ENCODE measurements at regions of chr12 and their contacts with region 1.

Region 1: DNA sequence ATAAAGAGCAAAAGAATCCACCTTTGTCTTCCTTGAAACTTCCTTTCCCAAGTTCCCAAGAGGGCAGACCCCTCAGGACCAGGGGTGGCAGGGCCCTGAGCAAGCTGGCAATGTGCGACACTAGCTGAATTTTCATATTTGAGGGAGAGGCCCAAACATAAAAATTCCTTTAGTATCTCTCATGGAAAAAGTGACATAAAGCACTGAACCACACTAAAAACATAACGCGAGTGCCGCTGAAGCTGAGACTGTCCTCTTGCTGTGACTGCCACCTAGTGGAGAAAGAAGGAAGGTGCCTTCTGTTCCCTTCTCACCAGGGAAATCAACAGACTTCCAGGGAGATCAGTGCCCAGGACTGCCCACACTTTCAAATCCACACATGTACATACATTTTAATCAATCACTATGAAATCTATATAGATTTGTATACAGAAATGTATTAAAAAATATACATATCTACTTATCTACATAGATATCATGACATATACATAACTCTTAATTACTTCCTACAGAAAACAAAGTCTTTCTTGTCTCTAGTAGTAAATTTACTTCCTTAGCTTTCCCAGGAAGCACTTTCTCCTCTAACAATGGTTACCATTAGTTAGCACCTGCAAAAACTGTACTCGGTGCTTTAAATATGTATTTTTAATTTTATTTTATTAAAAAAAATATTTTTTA is 53.8 kb downstream of the SSH1 start:
- DNase-seq: peak; percentile 85
- H3K4me3 ChIP-seq: no peak overlapping the region
- H3K27ac ChIP-seq: peak overlapping the region; percentile 99
- H3K27me3 ChIP-seq: no peaks in the 10 kb centered on the region
- CTCF ChIP-seq: peak; percentile 96

Region 2: GRCh38 chr12:107093417-107094182 is 1710.0 kb before region 1 on chr12 and contains the start of gene CRY1:
- CTCF ChIA-PET with region 1: no interaction called
- POLR2A ChIA-PET with region 1: interaction called, 14 read pairs
- DNase-seq: peak; percentile 86
- H3K4me3 ChIP-seq: peak within 1 kb of the TSS; percentile 93
- H3K27ac ChIP-seq: peak within 1 kb of the TSS; percentile 99
- H3K27me3 ChIP-seq: no peaks in the 10 kb centered on the region
- CTCF ChIP-seq: no peak
- polyA plus RNA-seq, gene CRY1: 10.3 and 13.7 TPM in 2 replicates

Region 3: DNA sequence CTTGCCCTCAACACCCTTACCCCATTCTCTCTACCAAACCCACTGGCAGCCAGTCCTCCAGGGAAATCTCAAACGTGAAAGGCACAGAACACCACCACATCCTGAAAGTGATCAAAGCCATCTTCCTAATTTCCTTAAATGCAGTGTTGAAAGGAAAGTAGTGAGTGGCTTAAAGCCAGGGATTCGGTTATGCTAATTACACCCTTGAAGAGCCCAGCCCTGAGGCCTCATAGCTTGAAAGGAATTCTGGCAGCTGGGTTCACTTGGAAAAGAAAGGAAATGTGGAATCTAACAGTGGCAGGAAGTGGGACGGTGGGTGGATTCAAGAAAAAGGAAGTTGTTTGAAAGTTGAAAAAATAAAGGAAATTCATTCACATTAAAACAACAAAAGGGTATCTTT is 361.5 kb before region 1 on chr12:
- CTCF ChIA-PET with region 1: no interaction called
- POLR2A ChIA-PET with region 1: no interaction called
- DNase-seq: no peak
- H3K4me3 ChIP-seq: no peak overlapping the region
- H3K27ac ChIP-seq: no peak overlapping the region
- H3K27me3 ChIP-seq: no peaks in the 10 kb centered on the region
- CTCF ChIP-seq: no peak

Region 4: GRCh38 chr12:108618079-108618952 is 185.3 kb before region 1 on chr12:
- CTCF ChIA-PET with region 1: interaction called, 50 read pairs
- POLR2A ChIA-PET with region 1: interaction called, 3 read pairs
- DNase-seq: peak; percentile 72
- H3K4me3 ChIP-seq: no peak overlapping the region
- H3K27ac ChIP-seq: no peak overlapping the region
- H3K27me3 ChIP-seq: no peaks in the 10 kb centered on the region
- CTCF ChIP-seq: peak; percentile 94

Region 5: DNA sequence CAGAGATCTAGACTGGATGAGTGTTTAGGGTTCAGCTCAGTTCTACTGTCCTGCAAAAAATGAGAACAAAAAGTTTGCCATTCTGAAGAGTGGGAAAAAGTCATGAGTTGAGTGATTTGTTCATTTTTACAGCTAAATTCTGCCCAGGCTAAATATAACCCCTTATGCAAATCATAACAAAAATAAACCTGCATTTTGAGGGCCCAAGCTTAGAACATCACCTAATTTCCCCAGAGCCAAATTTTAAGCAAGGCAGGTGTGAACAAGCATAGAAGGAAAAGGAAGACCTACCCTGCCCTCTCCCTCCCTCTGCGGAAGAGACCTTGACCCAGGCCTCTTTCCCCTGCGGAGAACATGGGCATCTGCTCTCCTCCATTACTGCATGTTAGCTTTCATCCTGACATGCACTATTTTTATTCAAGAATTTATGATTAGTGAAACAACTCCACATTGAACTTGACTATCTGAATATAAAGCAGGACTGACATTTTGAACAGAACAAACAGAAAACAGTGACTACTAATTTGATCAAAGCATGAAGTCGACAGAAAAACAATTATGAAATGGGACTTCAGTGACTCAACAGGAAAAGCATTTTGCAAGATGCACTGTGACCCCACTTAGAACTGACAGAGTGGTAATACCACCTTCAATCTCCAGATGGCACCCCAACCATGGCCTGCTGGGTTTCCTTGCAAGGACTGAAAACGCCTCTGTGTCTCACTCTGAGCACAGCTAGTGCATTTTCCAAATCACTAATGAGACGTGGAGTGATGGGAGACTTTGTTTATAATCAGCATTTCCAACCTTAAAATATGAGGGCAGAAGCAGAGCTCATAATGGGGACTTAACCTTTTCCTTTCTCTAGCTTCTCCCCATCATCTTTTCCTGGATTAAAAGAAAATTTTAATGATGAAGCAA is 139.0 kb before region 1 on chr12:
- CTCF ChIA-PET with region 1: interaction called, 177 read pairs
- POLR2A ChIA-PET with region 1: interaction called, 4 read pairs
- DNase-seq: peak; percentile 87
- H3K4me3 ChIP-seq: no peak overlapping the region
- H3K27ac ChIP-seq: peak overlapping the region; percentile 75
- H3K27me3 ChIP-seq: no peaks in the 10 kb centered on the region
- CTCF ChIP-seq: peak; percentile 98

Region 6: DNA sequence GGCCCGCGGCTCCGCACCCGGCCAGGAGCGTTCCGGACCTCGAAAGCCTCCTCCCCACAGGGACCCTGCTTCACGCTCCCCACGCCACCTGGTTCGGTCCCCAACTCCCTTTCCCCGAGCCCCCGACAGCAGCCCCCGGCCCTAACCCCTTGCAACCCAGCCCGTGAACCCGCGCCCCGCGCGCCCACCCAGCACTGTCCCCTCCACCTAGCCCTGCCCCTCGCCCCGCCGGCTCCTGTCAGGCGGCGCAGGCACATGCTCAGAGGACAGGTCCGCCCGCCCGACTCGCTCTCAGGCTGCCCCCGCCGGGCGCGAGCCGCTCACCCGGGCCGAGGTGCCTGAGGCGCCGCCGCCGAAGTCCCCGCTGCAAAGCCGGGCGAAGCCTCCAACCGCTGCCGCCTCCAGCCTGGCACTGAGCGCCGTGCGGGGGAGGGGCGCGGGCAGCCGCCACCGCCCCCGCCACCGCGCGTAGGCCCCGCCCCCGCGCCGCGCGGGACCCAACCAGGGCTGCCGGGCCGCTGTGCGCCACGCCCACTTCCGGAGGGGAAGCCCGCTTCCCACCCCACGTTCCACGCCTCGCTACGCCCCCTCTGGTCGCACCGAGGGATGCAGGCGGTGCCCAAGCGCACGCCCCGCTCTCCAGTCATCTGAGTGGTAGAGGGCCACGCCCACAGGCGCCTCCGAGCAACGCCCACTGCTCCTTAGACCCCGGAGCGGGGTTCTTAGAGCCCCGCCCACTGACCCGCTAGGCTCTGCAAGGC is 72.3 kb before region 1 on chr12 and contains the start of gene CORO1C:
- CTCF ChIA-PET with region 1: interaction called, 10 read pairs
- POLR2A ChIA-PET with region 1: interaction called, 9 read pairs
- DNase-seq: peak; percentile 91
- H3K4me3 ChIP-seq: peak within 1 kb of the TSS; percentile 98
- H3K27ac ChIP-seq: peak within 1 kb of the TSS; percentile 96
- H3K27me3 ChIP-seq: no peaks in the 10 kb centered on the region
- CTCF ChIP-seq: peak; percentile 77
- polyA plus RNA-seq, gene CORO1C: 596 and 687 TPM in 2 replicates

Region 7: GRCh38 chr12:108833355-108833733 is 29.8 kb after region 1 on chr12:
- CTCF ChIA-PET with region 1: interaction called, 8 read pairs
- POLR2A ChIA-PET with region 1: interaction called, 18 read pairs
- DNase-seq: no peak
- H3K4me3 ChIP-seq: peak overlapping the region; percentile 33
- H3K27ac ChIP-seq: peak overlapping the region; percentile 100
- H3K27me3 ChIP-seq: no peaks in the 10 kb centered on the region
- CTCF ChIP-seq: no peak

Region 8: GRCh38 chr12:108918206-108918605 is 114.6 kb after region 1 on chr12:
- CTCF ChIA-PET with region 1: no interaction called
- POLR2A ChIA-PET with region 1: no interaction called
- DNase-seq: no peak
- H3K4me3 ChIP-seq: no peak overlapping the region
- H3K27ac ChIP-seq: no peak overlapping the region
- H3K27me3 ChIP-seq: peaks cover 6% of the 10 kb centered on the region
- CTCF ChIP-seq: no peak

Region 9: GRCh38 chr12:108950991-108951739 is 147.6 kb after region 1 on chr12:
- CTCF ChIA-PET with region 1: interaction called, 18 read pairs
- POLR2A ChIA-PET with region 1: no interaction called
- DNase-seq: peak; percentile 13
- H3K4me3 ChIP-seq: no peak overlapping the region
- H3K27ac ChIP-seq: no peak overlapping the region
- H3K27me3 ChIP-seq: peaks cover 2% of the 10 kb centered on the region
- CTCF ChIP-seq: peak; percentile 84

Region 10: DNA sequence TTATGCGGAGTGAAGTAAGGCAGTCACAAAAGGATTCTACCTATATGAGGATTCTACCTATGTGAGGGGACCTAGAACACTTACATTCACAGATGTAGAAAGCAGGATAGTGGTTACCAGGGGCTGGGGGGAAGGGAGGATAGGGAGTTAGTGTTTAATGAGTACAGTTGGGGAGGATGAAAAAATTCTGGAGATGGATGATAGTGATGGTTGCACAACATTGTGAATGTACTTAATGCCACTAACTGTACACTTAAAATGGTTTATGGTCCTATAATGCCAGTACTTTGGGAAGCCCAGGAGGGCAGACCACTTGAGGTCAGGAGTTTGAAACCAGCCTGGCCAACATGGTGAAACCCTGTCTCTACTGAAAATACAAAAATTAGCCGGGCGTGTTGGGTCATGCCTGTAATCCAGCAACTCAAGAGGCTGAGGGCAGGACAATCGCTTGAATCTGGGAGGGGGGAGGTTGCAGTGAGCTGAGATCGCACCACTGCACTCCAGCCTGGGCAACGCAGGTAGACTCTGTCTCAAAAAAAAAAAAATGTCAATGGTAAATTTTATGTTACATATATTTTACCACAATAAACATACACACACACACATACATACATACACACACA is 191.9 kb after region 1 on chr12:
- CTCF ChIA-PET with region 1: no interaction called
- POLR2A ChIA-PET with region 1: no interaction called
- DNase-seq: no peak
- H3K4me3 ChIP-seq: no peak overlapping the region
- H3K27ac ChIP-seq: no peak overlapping the region
- H3K27me3 ChIP-seq: no peaks in the 10 kb centered on the region
- CTCF ChIP-seq: no peak

Region 11: GRCh38 chr12:109147954-109148353 is 344.4 kb after region 1 on chr12:
- CTCF ChIA-PET with region 1: no interaction called
- POLR2A ChIA-PET with region 1: no interaction called
- DNase-seq: no peak
- H3K4me3 ChIP-seq: no peak overlapping the region
- H3K27ac ChIP-seq: no peak overlapping the region
- H3K27me3 ChIP-seq: peaks cover 19% of the 10 kb centered on the region
- CTCF ChIP-seq: no peak

Measured in AG04450 (cell line).